Heart left ventricle (tissue), 16 donors: ENCODE measurements at regions of chr22 and their contacts with region 1.

Region 1: GRCh38 chr22:47030881-47031627 is 268.6 kb downstream of the TBC1D22A start:
- DNase-seq: peak in 2 of 5 donors; percentile 10 to 19
- ATAC-seq: no peak
- H3K4me3 ChIP-seq: no peak overlapping the region
- H3K27ac ChIP-seq: no peak overlapping the region
- H3K4me1 ChIP-seq: no peaks in the 10 kb centered on the region
- H3K27me3 ChIP-seq: no peaks in the 10 kb centered on the region
- CTCF ChIP-seq: no peak
- POLR2A ChIP-seq: no peak

Region 2: DNA sequence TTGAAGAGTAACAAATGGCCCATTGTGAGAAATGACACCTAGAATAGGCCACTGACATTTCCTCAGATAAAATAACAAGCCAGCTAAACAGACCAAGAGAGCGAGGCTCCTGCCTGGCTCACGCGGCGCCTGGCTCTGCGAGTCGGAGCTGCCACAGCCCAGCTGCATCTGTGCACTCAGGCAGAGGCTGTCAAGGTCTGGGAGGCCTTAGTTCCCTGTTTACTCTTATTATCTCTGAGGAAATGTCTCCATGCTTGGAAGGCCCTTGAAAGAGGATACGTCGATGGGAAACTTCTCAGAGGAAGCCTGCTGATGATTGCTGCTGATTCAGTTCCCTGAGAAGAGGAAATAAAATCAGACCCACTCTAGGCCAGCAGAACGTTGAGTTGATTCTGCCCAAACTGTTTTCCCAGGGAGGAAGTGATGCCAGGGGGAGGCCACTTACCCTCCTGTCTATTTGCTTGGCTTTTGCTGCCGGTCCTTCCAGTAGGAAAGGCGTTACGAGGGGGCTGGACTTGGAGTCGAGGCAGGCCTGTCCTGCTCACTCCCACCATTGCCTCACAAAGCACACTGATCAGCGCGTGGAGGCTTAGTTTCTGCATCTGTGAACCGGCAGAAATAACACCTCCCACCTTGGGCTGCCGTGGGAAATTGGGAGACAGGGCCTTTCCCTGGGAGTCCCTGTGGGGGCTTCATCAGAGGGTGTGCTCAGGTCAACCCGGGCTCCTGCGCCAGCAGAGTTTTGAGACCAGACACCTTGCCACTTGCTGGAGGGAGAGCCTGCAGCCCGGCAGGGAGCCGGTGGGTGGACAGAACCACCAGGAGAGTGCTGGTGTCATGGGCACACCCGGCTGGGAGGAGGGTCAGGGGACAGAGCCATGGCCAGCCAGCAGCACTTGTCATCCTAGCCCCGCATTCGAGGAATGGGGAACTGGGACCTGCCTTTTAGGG is 59.6 kb before region 1 on chr22:
- intact Hi-C with region 1: loop called in 1 of 10 experiments (anchors 5 kb)
- DNase-seq: peak; percentile 53 to 69 (median 55)
- ATAC-seq: peak; percentile 71 to 87 (median 81)
- H3K4me3 ChIP-seq: no peak overlapping the region
- H3K27ac ChIP-seq: peak overlapping the region; percentile 5 to 86 (median 67)
- H3K4me1 ChIP-seq: peaks cover 0 to 35% (median 24%) of the 10 kb centered on the region in 12 donors
- H3K27me3 ChIP-seq: no peaks in the 10 kb centered on the region
- CTCF ChIP-seq: no peak
- POLR2A ChIP-seq: no peak

Region 3: GRCh38 chr22:46984751-46985506 is 46.1 kb before region 1 on chr22:
- intact Hi-C with region 1: no loop called
- DNase-seq: no peak
- ATAC-seq: peak in 1 of 4 donors; percentile 16
- H3K4me3 ChIP-seq: no peak overlapping the region
- H3K27ac ChIP-seq: no peak overlapping the region
- H3K4me1 ChIP-seq: no peaks in the 10 kb centered on the region
- H3K27me3 ChIP-seq: no peaks in the 10 kb centered on the region
- CTCF ChIP-seq: no peak
- POLR2A ChIP-seq: no peak